ENCODE measurements at regions of chr21 and their contacts with region 1.

Region 1: DNA sequence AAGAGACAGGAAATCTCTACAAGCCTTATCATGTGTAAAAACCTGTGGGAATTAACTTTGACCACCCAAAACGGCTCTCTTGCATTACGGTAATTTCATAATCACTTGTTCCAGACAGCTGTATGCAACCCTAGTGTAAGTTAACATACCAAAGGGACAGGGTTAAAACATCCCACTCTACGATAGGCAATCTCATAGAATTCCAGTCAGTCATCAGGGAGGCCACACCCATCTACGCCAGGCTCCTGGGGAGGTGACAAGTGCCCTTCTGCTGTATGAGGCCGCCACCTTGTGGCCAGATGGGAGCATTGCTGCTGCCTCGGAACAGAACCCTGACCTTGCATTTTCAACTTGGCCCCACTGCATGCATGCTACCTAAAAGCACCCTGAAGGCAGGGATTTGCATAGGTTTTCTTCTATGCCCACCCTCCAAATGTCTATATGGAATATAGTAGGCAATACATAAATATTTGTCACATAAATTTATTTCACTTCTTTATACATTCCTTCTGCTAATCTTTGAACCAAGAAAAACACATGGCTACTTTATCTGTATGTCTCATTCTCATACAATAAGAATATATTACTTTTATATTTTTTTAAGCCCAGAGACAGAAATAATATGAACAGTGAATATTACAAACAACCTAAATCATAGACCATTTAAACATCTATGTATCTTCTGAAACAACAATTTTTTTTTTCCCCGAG is 12.6 kb downstream of the HSF2BP start:
- DNase-seq: peak; percentile 71
- ATAC-seq: peak; percentile 99
- H3K4me3 Mint-ChIP-seq: peak overlapping the region; percentile 44
- H3K27ac Mint-ChIP-seq: no peak overlapping the region
- H3K4me1 Mint-ChIP-seq: peaks cover 18% of the 10 kb centered on the region
- H3K27me3 Mint-ChIP-seq: peaks cover 9% of the 10 kb centered on the region
- CTCF ChIP-seq: peak; percentile 84

Region 2: DNA sequence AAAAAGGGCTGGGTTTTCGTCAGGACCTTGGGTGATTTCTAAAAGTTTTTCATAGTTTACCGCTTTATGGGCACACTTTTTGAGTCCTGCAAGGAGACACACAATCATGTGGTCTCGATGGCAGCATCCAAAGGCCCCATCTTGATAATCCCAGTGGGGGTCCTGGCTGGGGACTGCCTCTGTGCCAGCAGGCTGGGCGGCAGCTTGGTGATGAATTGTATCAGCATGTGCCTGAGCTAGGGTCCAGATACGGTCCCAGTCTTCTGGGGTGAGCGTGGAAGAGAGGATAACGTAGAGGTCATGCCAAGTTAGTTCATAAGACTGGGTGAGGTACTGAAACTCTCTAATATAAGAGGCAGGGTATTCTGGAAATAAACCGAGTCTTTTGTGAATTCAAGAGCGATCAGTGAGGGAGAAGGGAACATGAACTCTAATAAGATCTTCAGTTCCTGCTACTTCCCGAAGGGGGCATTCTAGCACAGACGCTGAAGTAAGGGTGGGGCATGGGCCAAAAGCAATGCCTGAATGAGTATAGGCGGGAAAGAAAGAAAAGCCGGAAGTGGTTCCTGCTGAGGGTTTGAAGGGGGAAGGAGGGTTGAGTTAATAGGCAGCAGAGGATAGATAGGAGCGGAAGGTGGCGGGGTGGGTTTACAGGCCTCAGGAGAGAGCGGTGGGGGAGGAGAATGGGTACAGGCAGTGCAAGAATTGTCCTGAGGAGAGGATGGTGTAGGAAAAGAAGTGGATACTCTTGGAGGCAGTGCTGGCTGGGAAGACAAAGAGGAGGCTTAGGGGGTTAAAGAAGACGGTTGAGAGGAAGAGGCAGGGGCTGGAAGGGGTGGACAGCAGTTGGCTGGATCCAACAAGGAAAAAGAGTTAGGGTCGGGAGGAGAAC is 722.9 kb before region 1 on chr21:
- CTCF ChIA-PET with region 1: interaction called, 3 read pairs
- POLR2A ChIA-PET with region 1: no interaction called
- intact Hi-C with region 1: loop called (anchors 1 kb)
- DNase-seq: peak; percentile 32
- ATAC-seq: peak; percentile 96
- H3K4me3 Mint-ChIP-seq: peak overlapping the region; percentile 42
- H3K27ac Mint-ChIP-seq: peak overlapping the region; percentile 71
- H3K4me1 Mint-ChIP-seq: peaks cover 12% of the 10 kb centered on the region
- H3K27me3 Mint-ChIP-seq: no peaks in the 10 kb centered on the region
- CTCF ChIP-seq: no peak

Region 3: DNA sequence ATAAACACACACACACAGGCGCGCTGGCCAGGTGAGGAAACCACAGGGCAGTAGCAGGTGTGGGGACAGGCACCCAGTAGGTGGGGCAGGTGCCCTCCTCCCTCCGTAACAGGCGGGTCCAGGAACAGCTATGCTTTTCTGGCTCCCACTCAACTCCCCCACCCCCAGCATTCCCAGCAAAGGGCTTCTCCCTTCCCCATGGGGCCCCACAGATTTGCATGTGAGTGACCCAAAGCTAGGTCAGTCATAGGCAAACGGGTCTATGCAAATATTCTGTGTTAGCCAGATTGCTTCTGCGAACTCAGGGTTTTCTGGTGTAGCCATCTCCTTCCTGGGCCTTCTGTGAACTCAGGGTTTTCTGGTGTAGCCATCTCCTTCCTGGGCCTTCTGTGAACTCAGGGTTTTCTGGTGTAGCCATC is 333.9 kb before region 1 on chr21:
- CTCF ChIA-PET with region 1: interaction called, 3 read pairs
- POLR2A ChIA-PET with region 1: no interaction called
- intact Hi-C with region 1: loop called (anchors 5 kb)
- DNase-seq: no peak
- ATAC-seq: peak; percentile 29
- H3K4me3 Mint-ChIP-seq: no peak overlapping the region
- H3K27ac Mint-ChIP-seq: no peak overlapping the region
- H3K4me1 Mint-ChIP-seq: peaks cover 44% of the 10 kb centered on the region
- H3K27me3 Mint-ChIP-seq: peaks cover 4% of the 10 kb centered on the region
- CTCF ChIP-seq: no peak

Region 4: DNA sequence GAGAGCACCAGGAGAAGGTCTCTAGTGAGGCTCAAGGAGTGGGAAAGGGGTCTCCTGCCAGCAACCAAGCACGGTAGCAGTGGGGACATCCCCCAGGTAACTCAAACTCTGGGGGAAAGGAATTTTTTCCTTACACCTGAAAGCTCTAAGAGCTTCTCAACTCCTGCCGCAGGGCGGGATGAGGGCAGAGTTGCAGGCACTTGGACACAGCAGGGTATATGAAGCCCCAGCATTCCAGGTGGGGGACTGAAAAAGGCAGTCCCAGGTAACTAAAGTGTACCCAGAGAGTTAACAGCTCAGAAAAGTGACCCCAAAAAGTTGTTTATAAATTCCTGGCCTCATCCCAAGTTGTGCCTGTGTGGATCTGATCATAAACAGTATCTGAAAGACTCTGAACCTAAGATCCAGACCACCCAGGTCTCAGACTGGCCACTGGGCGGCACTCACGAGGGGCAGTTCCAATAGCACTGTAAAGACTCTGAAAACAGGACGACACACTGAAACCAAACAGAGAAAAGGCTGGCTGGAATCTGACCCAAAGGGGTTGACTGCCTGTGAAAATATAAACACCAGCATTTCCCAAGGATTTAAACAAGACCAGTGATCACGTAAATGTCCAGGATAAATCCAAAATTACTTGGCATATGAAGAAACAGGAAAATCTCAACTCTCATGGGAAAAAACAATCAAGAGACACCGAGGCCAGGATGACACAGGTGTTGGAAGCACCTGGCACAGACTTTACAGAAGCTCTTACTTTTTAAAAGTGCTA is 34.9 kb before region 1 on chr21:
- CTCF ChIA-PET with region 1: interaction called, 10 read pairs
- POLR2A ChIA-PET with region 1: no interaction called
- intact Hi-C with region 1: loop called (anchors 1 kb)
- DNase-seq: no peak
- ATAC-seq: peak; percentile 64
- H3K4me3 Mint-ChIP-seq: no peak overlapping the region
- H3K27ac Mint-ChIP-seq: no peak overlapping the region
- H3K4me1 Mint-ChIP-seq: peaks cover 7% of the 10 kb centered on the region
- H3K27me3 Mint-ChIP-seq: no peaks in the 10 kb centered on the region
- CTCF ChIP-seq: no peak

Region 5: DNA sequence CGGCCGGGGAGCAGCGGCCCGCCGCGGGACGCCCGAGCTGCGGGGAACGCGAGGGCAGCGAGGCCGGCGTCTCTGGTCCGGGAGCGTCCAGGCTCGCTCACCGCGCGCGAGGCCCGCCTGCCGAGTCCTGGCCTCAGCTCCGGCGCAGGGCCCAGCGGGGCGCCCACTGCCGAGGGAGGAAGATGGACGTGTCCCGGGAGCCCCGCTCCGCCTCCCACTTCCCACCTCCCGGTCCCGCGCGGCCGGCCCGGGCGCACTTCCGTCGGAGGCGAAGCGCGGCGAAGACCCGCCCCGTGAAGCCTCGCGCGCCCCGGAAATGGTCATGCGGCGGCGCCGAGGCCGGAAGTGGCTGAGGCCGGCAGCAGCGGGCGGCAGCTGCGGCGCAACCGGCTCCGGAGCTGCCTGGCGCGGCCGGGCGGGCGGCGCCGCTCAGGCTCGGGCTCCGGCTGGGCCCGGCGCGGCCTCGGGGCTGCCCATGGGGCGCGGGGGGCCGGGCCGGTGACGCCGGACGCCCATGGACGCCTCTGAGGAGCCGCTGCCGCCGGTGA is 365.3 kb after region 1 on chr21 and contains the start of gene TRAPPC10:
- CTCF ChIA-PET with region 1: no interaction called
- POLR2A ChIA-PET with region 1: no interaction called
- intact Hi-C with region 1: no loop called
- DNase-seq: peak; percentile 83
- ATAC-seq: peak; percentile 66
- H3K4me3 Mint-ChIP-seq: peak within 1 kb of the TSS; percentile 87
- H3K27ac Mint-ChIP-seq: peak within 1 kb of the TSS; percentile 86
- H3K4me1 Mint-ChIP-seq: peaks cover 43% of the 10 kb centered on the region
- H3K27me3 Mint-ChIP-seq: no peaks in the 10 kb centered on the region
- CTCF ChIP-seq: no peak
- total RNA-seq, gene TRAPPC10: 77.8 and 96.0 TPM in 2 replicates

Measured in activated B cell treated with CpG ODN at 0.5 μM for 24 hours (primary cell).